CD8-positive, alpha-beta T cell (primary cell): ENCODE measurements at regions of chr13 and their contacts with region 1.

Region 1: DNA sequence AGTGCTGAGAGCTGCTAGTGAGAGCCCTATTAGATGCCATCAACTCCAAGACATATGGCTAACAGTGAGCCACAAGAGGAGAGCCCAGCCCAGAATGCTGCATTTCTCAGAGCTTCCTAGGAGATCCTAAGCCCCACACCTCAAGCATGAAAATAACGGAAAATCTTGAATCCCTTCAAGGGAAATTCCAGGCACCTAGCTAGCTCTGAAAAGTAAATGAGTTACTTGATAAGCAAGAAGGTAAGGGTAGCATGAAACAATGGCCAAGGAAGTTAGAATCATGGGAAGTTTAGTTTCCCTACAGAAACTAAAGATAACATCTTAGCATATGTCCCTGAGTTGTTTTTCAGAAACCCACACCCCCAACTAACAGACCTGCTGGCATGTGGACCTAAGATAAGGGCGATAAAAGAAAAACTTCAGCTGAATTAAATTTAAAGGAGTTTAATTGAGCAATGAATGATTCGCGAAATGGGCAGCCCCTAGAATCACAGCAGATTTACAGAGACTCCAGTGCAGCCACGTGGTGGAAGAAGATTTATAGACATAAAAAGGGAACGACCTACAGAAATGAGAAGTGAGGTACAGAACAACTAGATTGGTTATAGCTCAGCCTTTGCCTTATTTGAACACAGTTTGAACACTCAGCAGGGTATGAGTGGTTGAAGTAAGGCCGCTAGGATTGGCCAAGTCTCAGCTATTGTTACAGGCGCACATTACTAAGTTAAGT is 301.3 kb upstream of the DACH1 start:
- DNase-seq: no peak
- ATAC-seq: no peak
- H3K4me3 ChIP-seq: no peak overlapping the region
- H3K4me3 Mint-ChIP-seq: no peak overlapping the region
- H3K27ac ChIP-seq: no peak overlapping the region
- H3K27ac Mint-ChIP-seq: no peak overlapping the region
- H3K4me1 ChIP-seq: no peaks in the 10 kb centered on the region
- H3K4me1 Mint-ChIP-seq: no peaks in the 10 kb centered on the region
- H3K27me3 ChIP-seq: no peaks in the 10 kb centered on the region
- H3K27me3 Mint-ChIP-seq: no peaks in the 10 kb centered on the region
- CTCF ChIP-seq: no peak

Region 2: DNA sequence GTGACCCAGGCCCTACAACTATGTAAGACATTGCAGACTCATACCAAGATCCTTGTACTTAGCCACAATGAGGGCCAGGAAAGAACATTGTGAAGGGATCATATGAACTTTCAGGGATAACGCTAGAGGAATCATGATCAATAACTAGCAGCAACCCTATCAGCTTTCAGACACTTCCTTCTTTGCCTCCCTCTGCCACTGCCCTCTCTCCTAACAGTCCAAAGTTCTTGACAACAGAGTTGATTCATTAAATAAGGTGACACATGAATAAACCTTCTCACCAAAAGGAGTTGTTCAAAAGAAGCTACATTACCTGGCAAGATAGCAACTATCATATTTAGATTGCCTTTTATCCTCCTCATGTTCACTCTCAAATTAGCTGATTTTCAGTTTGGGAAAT is 29.1 kb before region 1 on chr13:
- CTCF ChIA-PET with region 1: no interaction called
- POLR2A ChIA-PET with region 1: no interaction called
- intact Hi-C with region 1: loop called in 1 of 2 experiments (anchors 1 kb)
- DNase-seq: no peak
- ATAC-seq: no peak
- H3K4me3 ChIP-seq: no peak overlapping the region
- H3K4me3 Mint-ChIP-seq: no peak overlapping the region
- H3K27ac ChIP-seq: no peak overlapping the region
- H3K27ac Mint-ChIP-seq: no peak overlapping the region
- H3K4me1 ChIP-seq: no peaks in the 10 kb centered on the region
- H3K4me1 Mint-ChIP-seq: no peaks in the 10 kb centered on the region
- H3K27me3 ChIP-seq: no peaks in the 10 kb centered on the region
- H3K27me3 Mint-ChIP-seq: no peaks in the 10 kb centered on the region
- CTCF ChIP-seq: no peak